Head of caudate nucleus (tissue), 42 donors: ENCODE measurements at regions of chr19 and their contacts with region 1.

Region 1: DNA sequence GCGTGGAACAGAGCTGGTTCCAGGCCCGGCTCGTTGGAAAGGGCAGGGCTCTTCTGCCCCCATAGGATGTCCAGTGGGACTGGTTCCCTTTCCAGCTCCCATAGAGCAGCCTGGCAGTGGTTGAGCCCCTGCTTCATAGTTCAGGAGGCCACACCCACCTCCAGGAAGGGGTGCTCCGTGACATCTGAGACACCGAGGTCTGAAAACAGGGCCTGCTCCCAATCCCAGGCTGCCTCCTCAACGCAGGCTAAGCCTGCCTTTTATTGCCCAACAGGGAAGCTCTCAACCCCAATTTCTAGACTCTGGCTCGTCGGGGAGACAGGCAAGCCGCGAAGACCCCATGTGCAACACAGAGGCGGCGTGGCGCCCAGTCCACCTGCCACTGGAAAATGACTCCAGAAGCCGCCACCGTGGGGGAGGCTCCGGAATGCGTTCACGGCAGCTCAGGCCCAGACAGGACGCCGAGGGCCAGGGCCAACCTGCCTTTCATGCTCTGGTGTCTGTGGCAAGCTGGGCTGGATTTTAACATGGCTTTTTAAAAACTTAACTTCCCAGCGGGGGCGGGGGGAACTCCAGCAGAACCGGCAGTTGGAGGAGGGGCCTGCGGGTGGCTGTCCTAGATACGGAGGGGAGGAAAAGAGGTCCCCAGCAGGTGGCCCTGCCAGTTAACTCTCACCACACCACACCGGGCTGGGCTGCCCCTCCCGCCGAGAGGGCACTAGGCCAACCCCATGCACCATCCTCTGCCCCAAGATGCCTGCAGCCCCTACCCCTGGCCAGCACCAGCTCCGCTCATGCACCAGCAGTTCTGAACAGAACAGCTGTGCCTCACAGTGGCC is 17.9 kb upstream of the TINCR start:
- DNase-seq: peak in 40 of 42 donors; percentile 11 to 75 (median 45)

Region 2: DNA sequence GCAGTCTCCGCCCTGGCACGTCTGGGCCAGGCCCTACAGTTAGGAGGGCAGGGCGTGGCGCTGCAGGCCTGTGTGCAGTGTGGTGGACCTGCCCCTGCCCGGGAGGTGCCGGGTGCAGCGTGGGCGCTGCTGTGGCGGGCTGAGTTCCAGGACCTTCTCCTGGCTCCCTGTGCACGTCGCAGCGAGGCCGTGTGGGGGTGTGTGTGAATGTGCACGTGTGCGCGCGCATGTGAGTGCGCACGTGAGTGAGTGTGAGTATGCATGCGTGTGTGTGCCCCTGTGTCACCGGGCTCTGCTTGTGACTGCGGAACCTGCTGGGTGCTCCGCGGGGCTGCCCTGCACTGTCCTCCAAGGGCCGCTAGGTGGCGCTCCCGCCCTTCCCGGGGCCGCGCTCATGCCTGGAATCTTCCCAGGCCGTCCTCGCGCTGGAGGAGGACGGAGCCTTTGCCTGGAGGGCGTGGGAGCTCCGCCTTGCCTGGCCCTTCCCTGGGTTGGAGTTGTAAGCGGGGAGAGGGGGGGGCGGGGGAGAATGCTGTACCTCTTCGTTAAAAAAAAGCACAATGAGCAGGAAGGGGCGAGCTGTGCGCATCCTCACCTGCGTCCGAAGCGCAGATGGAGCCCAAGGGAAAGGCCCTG is 537.5 kb before region 1 on chr19:
- intact Hi-C with region 1: loop called (anchors 10 kb)
- DNase-seq: peak; percentile 61 to 92 (median 85)

Region 3: DNA sequence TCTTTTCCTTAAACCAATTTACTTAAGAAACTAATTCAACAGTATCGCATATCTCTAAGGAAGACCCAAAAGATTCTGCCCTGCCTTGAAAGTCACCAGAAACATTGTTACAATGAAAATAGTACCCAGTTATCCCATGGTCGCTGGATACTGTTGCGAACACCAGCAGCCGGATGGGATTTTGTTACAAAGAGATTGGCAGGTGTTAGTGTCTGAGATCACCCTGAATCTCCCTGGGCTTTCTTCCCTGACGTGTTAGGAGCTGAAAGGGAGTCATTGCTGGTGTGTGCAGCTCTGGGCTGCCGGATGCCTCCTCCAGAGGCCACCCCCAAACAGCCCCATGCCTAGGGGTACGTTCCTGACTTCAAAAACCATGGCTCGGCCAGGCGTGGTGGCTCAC is 283.3 kb before region 1 on chr19:
- intact Hi-C with region 1: no loop called
- DNase-seq: no peak

Region 4: DNA sequence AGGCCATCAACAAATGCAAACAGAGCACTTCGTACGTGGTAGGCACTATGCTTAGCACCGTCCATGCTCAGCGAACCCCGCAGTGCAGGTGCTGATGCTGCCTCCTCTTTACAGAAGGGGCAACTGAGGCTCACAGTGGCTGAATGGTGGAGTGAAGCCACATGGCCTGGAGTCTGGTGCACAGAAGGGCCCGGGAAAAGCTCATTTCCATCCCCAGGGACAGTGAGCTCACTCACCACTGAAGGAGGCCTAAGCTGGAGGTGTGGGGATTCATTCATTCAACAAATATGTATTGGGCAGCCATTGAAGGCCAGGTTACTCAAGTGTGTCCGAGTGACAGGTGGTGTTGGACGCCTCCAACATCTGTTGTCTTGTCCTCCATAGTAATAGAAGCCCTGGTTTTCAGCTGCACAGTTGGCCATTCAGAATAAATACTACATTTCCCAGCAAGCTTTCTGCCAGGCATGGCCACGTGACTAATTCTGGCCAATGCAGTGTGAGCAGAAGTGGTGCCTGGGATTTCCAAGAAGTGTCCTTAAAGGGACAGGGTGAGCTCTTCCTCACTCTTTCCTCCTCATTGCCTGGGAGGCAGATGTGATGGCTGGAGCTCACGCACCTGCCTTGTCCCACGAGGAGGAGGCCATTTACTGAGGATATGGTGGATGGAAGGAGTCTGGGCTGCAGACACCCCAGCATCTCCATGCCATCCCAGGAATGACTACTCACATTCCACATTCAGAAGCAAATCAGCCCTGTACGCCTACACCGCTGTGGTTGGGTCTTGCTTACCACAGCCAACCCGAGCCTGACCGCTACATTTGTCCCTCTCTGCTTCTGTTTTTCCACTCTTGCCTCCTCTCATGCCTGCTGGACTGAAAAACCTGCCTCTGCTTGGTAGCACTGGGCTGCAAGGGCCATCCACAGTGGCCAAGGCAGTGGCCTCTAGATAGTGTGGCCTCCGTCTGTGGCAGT is 132.8 kb before region 1 on chr19:
- intact Hi-C with region 1: no loop called
- DNase-seq: no peak